Naive thymus-derived CD8-positive, alpha-beta T cell (primary cell): ENCODE measurements at regions of chr5 and their contacts with region 1.

Region 1: DNA sequence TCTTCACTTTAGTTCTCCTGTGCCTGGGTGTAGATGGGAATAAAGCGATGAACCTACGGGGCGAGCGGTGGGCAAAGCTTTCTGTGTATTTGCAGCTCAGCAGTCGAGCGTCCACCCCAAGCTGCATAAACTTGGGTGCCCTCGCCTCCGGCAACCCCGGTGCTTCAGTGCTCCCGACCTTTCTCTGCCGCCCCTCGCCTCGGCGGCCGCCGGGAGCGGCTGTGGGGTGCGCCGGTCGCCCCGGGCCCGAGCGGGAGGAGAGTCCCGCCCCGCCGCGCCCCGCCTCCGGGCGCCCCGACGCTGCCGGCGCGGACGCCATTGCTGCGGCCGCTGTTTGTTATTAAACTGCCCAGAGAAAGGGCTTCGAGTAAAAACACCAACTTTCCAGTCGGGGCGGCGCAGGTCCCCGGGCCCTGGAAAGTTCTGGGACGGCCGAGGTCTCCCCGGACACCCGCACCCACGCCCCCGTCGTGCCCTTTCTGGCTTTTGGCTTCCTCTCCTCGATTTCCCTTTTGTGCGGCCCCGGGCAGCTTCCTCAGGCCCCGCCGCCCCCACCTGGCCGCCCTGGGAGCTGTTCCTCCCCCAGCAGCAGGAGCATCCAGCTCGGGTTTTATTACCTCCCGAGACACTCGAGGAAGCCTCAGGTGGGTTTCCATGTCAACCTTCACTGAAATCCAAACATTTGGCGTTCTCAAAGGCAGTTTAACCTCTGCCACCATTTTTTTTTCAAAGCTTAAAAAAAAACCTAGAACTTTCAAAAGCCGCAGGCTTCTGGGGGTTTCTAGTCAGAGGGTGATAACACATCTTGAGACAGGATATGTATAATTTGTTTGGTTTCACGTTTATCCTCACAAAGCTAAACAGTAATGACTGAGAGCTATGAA is 334.3 kb downstream of the CWC27 start:
- DNase-seq: peak; percentile 39 to 79 (median 62)
- ATAC-seq: peak; percentile 76 to 80
- H3K4me3 Mint-ChIP-seq: peak overlapping the region; percentile 82 to 93 (median 89)
- H3K27ac Mint-ChIP-seq: peak overlapping the region; percentile 95 to 99 (median 97)
- H3K4me1 Mint-ChIP-seq: peaks cover 32 to 56% (median 46%) of the 10 kb centered on the region in 4 donors
- H3K27me3 Mint-ChIP-seq: no peaks in the 10 kb centered on the region

Region 2: GRCh38 chr5:65035211-65036206 is 67.6 kb before region 1 on chr5:
- POLR2A ChIA-PET with region 1: interaction called, 16 read pairs
- DNase-seq: peak; percentile 59 to 95 (median 86)
- ATAC-seq: peak; percentile 80 to 81
- H3K4me3 Mint-ChIP-seq: peak overlapping the region; percentile 70 to 88 (median 85)
- H3K27ac Mint-ChIP-seq: peak overlapping the region; percentile 89 to 98 (median 94)
- H3K4me1 Mint-ChIP-seq: peaks cover 12 to 39% (median 30%) of the 10 kb centered on the region in 4 donors
- H3K27me3 Mint-ChIP-seq: no peaks in the 10 kb centered on the region

Region 3: DNA sequence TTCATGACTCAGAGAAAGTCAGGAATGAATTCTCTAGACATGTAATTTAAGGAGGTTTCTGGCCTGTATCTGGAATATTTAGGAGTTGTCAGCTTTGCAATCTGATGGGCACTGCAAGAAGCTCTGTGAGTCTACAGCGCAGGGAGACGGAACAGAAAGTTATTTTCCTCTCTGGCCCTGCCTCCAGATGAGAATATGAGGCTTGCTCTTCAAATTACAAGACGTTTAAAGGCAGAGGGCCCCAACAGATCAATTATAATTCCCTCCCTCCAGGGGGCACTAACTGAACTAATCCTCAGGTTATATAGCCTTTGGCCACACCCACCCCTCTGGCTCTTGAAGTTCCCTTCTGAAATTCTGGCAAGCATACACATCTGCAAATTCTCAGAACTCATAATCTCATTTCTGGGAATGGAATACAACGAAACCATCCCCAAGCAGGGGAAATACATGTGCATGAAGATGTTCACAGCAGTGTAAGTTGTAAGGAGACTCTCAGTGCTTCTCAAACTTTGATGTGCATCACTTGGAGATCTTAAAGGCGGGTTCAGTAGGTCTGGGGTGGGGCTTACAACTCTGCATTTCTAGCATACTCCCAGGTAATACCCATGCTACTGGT is 26.7 kb before region 1 on chr5:
- POLR2A ChIA-PET with region 1: no interaction called
- DNase-seq: peak in 9 of 10 donors; percentile 17 to 76 (median 43)
- ATAC-seq: peak; percentile 93 to 98
- H3K4me3 Mint-ChIP-seq: no peak overlapping the region
- H3K27ac Mint-ChIP-seq: peak overlapping the region in 5 of 10 donors; percentile 19 to 81 (median 70)
- H3K4me1 Mint-ChIP-seq: peaks cover 2 to 9% (median 7%) of the 10 kb centered on the region in 4 donors
- H3K27me3 Mint-ChIP-seq: peaks cover 0 to 1% (median 0%) of the 10 kb centered on the region in 5 donors